ENCODE measurements at regions of chr5 and their contacts with region 1.

Region 1: GRCh38 chr5:159987031-159987674 is 21.8 kb upstream of the TTC1 start:
- DNase-seq: peak; percentile 78 to 94 (median 86)
- ATAC-seq: peak; percentile 99 to 100 (median 100)
- H3K4me3 ChIP-seq: peak overlapping the region; percentile 16 to 48 (median 40)
- H3K27ac ChIP-seq: no peak overlapping the region
- H3K4me1 ChIP-seq: no peaks in the 10 kb centered on the region
- H3K27me3 ChIP-seq: peaks cover 0 to 1% (median 0%) of the 10 kb centered on the region in 4 donors
- CTCF ChIP-seq: peak; percentile 38 to 84 (median 62)

Region 2: DNA sequence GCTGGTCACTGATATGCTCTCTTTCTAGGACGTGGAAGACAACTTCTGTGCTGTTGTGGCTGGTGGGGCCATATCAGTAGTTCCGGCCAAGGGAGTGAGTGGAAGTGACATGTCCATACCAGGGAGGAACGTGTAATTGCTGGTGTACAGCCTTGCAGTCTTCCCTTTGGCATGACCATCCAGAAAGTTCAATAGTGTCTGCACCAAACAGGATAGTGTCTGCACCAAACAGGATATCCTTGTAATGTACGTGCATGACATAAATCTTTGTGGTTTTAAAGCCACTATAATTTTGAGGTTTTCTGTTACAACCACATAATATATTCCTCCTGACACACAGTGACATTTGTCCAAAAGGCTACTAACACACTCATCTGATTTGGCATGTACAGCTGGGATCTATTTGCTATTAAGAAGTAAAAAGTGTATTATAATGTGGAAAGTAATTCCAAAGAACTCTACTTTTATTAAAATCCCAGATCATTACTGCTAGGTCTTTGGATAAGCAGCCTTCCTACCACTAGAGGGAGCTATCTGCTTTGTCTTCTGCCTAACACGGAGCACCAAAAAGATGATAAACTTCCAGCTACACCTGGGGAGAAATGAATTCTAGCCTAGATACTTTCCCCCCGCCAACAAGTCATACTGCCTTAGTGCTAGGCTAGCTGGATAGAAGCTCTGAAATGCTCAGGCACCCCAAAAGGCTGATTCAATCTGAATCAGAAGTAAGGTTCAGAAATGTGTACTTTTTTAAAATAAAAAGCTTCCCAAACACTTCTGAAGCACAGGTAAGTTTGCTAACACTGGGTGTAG is 830.5 kb before region 1 on chr5:
- intact Hi-C with region 1: loop called in 1 of 3 experiments (anchors 10 kb)
- DNase-seq: peak in 2 of 6 donors; percentile 33 to 42
- ATAC-seq: peak; percentile 70 to 94 (median 90)
- H3K4me3 ChIP-seq: no peak overlapping the region
- H3K27ac ChIP-seq: no peak overlapping the region
- H3K4me1 ChIP-seq: no peaks in the 10 kb centered on the region
- H3K27me3 ChIP-seq: no peaks in the 10 kb centered on the region
- CTCF ChIP-seq: peak; percentile 52 to 88 (median 73)

Region 3: GRCh38 chr5:159444441-159445082 is 542.6 kb before region 1 on chr5:
- intact Hi-C with region 1: loop called in 2 of 3 experiments (anchors 5 to 10 kb)
- DNase-seq: no peak
- ATAC-seq: peak in 3 of 4 donors; percentile 53 to 80 (median 69)
- H3K4me3 ChIP-seq: no peak overlapping the region
- H3K27ac ChIP-seq: no peak overlapping the region
- H3K4me1 ChIP-seq: no peaks in the 10 kb centered on the region
- H3K27me3 ChIP-seq: no peaks in the 10 kb centered on the region
- CTCF ChIP-seq: peak in 1 of 4 donors; percentile 12

Region 4: GRCh38 chr5:159764283-159765134 is 222.6 kb before region 1 on chr5:
- intact Hi-C with region 1: no loop called
- DNase-seq: no peak
- ATAC-seq: no peak
- H3K4me3 ChIP-seq: no peak overlapping the region
- H3K27ac ChIP-seq: no peak overlapping the region
- H3K4me1 ChIP-seq: no peaks in the 10 kb centered on the region
- H3K27me3 ChIP-seq: no peaks in the 10 kb centered on the region
- CTCF ChIP-seq: no peak

Region 5: DNA sequence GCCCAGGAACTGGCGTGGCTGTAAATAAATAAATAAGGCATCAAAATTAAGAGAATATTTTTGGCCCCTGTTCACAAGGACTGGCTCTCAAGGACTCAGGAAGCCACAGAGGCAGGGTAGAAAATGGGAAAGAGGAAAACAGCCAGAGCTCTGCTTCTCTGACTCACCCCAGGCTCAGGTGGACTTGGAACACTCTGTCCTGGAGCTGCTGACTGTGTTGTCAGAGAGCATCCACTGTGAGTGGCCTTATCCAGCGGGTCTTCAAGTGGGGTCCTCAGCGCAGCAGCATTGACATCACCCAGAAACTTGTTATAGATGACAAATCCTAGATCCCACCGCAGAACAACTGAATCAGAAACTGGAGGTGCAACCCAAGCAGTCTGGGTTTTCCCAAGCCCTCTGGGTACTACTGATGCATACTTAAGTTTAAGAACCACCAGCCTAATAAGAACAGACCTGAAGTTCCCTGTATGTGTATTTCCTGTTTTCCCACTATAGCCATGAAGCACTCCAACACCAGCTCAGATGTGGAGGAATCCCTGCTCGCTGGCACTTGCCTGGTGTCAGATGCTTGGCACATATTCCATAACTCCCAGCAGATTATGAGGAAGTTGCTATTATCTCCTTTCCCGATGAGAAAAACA is 50.3 kb before region 1 on chr5:
- intact Hi-C with region 1: no loop called
- DNase-seq: no peak
- ATAC-seq: no peak
- H3K4me3 ChIP-seq: no peak overlapping the region
- H3K27ac ChIP-seq: no peak overlapping the region
- H3K4me1 ChIP-seq: no peaks in the 10 kb centered on the region
- H3K27me3 ChIP-seq: no peaks in the 10 kb centered on the region
- CTCF ChIP-seq: no peak

Measured in pancreas (tissue), 10 donors.